Activated CD4-positive, alpha-beta memory T cell treated with anti-CD3 and anti-CD28 coated beads, Interleukin-2, amount 10 ng/mL, durations not matched to agents 7 days and 5 days (primary cell): ENCODE measurements at regions of chr3 and their contacts with region 1.

Region 1: DNA sequence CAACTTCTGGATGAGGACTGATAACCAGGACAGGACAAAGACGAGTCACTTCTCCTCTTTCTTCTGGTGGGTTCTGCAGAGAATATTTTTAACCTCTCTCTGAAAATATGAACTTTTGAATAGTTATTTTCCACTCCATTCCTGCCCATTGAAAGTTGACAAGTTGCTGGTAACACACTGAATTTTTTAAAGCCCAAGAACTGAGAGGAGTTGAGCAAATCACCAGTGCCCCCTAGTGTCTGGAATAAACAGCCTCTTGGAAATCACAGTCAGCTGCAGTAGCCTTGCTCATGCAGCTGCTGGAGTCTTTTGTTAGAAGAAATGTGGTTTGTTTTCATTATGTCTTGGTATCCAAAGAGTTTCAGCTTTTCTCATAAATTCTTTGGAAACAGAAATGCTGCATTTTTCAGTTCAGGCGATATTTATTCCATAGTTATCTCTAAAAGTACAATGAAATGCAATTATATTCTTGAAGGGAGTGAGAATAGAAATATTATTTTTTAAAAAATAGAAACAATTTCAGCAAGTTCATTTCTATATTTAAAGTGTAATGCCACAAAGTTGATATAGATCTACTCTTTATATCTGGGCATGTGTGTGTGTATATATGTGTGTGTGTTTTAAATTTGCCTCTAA is 741.0 kb upstream of the CBLB start:
- DNase-seq: peak; percentile 70
- H3K4me3 Mint-ChIP-seq: no peak overlapping the region
- H3K27ac Mint-ChIP-seq: no peak overlapping the region
- H3K4me1 Mint-ChIP-seq: peaks cover 9% of the 10 kb centered on the region
- H3K27me3 Mint-ChIP-seq: no peaks in the 10 kb centered on the region

Region 2: GRCh38 chr3:105686278-105686897 is 923.4 kb before region 1 on chr3:
- CTCF ChIA-PET with region 1: interaction called, 23 read pairs
- POLR2A ChIA-PET with region 1: no interaction called
- DNase-seq: no peak
- H3K4me3 Mint-ChIP-seq: no peak overlapping the region
- H3K27ac Mint-ChIP-seq: no peak overlapping the region
- H3K4me1 Mint-ChIP-seq: peaks cover 15% of the 10 kb centered on the region
- H3K27me3 Mint-ChIP-seq: no peaks in the 10 kb centered on the region

Region 3: DNA sequence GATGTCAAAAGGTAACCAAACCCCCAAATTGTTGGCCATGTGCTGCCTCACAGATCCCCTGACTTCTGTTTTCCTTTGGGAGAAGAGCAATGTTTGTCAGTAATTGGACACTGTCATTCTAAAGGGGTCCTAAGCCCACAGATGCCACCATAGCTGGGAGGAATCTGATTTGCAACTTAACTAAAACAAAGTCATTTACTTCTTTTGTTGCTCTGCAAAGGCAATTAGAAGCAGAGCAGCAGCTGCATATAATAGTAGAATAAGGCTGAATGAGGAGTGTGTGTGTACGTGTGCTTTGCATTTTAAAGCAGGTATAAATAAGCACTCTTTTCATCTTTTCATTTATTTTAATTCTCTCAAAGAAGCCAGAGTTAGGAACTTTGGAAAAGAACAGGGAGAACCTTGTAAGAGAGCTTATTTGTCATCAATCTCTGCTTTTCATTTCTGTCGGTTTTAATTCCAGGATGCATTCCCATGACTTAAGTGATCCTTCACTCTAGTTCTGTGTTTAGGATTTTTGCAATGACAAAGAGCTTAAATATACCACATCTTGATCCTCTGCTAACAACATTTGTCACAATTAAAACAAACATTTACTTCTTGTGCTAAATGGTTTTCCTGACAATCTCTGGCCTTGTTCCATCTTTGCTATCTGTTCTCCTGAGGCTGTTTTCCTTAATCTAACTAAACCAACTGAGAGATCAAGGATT is 210.7 kb before region 1 on chr3:
- CTCF ChIA-PET with region 1: no interaction called
- POLR2A ChIA-PET with region 1: no interaction called
- DNase-seq: no peak
- H3K4me3 Mint-ChIP-seq: no peak overlapping the region
- H3K27ac Mint-ChIP-seq: no peak overlapping the region
- H3K4me1 Mint-ChIP-seq: no peaks in the 10 kb centered on the region
- H3K27me3 Mint-ChIP-seq: no peaks in the 10 kb centered on the region

Region 4: GRCh38 chr3:106635271-106635670 is 25.5 kb after region 1 on chr3:
- CTCF ChIA-PET with region 1: no interaction called
- POLR2A ChIA-PET with region 1: no interaction called
- DNase-seq: no peak
- H3K4me3 Mint-ChIP-seq: no peak overlapping the region
- H3K27ac Mint-ChIP-seq: no peak overlapping the region
- H3K4me1 Mint-ChIP-seq: no peaks in the 10 kb centered on the region
- H3K27me3 Mint-ChIP-seq: no peaks in the 10 kb centered on the region